Astrocyte of the cerebellum (primary cell): ENCODE measurements at regions of chr10 and their contacts with region 1.

Region 1: DNA sequence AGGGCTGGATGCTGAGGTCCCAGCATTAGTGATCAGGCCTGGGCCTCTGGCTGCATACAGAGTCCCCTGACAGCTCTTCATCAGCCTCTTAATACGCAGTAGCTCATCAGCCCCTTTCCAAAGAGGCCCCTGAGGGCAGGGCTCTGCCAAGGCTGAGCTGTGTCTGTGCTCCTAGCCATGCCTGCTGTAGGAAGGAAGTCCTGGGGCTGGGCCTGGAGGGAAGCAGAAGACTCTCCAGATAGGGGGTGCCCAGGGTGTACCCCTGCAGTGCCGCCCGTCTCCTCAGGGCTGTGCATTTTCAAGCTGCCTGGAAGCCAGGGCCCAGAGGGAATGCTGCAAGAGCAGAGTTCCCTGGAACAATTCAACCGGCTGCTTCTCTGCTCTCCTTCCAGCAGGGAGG is 7.3 kb upstream of the RET start:
- DNase-seq: no peak
- H3K4me3 ChIP-seq: no peak overlapping the region
- CTCF ChIP-seq: no peak

Region 2: GRCh38 chr10:43000651-43001423 is 68.7 kb before region 1 on chr10:
- in situ Hi-C with region 1: loop called (anchors 5 kb)
- DNase-seq: no peak
- H3K4me3 ChIP-seq: no peak overlapping the region
- CTCF ChIP-seq: no peak

Region 3: GRCh38 chr10:43026011-43026973 is 43.3 kb before region 1 on chr10:
- in situ Hi-C with region 1: loop called (anchors 5 kb)
- DNase-seq: no peak
- H3K4me3 ChIP-seq: no peak overlapping the region
- CTCF ChIP-seq: no peak

Region 4: GRCh38 chr10:43138021-43138756 is 68.6 kb after region 1 on chr10 and contains the start of gene CSGALNACT2:
- in situ Hi-C with region 1: no loop called
- DNase-seq: peak; percentile 40
- H3K4me3 ChIP-seq: peak within 1 kb of the TSS; percentile 87
- CTCF ChIP-seq: no peak